ENCODE measurements at regions of chr1 and their contacts with region 1.

Region 1: DNA sequence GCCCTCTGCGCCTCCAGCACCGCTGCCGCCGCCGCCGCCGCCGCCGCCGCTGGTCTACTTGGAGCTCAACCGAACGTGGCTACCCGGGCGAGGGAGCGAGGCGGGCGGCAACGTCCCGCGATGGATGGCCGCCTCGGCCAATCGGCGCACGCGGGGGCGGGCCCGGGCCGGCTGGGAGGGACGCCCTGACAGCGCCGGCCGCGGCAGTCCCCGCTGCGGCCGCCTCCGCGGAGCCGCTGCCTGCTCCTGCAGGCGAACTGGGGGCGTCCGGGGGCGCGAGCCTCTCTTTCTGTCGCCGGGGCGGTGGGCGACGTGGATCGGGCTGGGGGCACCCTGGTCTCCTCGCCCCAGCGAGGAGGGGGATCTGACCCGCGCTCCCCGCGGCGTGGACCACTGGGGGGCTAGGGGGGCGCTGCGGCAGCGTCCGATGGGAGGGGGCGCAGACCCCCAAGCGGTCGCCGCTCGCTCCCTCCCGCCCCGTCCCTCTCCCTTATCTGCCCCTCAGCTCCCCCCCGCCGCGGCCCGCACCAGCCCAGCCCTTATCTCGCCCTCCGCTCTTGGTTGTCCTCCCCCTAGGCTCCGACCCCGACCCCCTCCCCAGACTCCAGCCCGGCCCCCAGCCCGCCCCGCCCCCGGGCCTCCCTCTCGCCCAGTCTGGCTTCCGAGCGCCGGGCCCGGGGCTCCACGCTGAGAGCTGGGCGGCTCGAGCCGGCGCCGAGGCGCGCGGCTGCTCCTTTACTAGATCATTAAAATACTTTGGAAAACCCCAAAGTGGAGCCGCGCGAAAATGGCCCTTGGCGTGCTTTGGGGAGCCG is at the start of gene SSBP3:
- DNase-seq: peak; percentile 53 to 95
- H3K4me3 ChIP-seq: peak within 1 kb of the TSS; percentile 91 to 96
- H3K27ac ChIP-seq: peak within 1 kb of the TSS; percentile 85 to 86
- H3K4me1 ChIP-seq: peaks cover 6 to 35% of the 10 kb centered on the region in 2 donors
- H3K27me3 ChIP-seq: no peaks in the 10 kb centered on the region
- CTCF ChIP-seq: peak in 1 of 3 experiments; percentile 22
- total RNA-seq, gene SSBP3: 51.0 TPM

Region 2: GRCh38 chr1:53945433-53946251 is 460.9 kb before region 1 on chr1 and contains the start of gene IFT25:
- intact Hi-C with region 1: loop called (anchors 2 kb)
- DNase-seq: peak; percentile 87 to 98
- H3K4me3 ChIP-seq: peak within 1 kb of the TSS; percentile 80 to 96
- H3K27ac ChIP-seq: peak within 1 kb of the TSS; percentile 77 to 98
- H3K4me1 ChIP-seq: peaks cover 9 to 16% of the 10 kb centered on the region in 2 donors
- H3K27me3 ChIP-seq: no peaks in the 10 kb centered on the region
- CTCF ChIP-seq: no peak
- total RNA-seq, gene IFT25: not detected

Region 3: DNA sequence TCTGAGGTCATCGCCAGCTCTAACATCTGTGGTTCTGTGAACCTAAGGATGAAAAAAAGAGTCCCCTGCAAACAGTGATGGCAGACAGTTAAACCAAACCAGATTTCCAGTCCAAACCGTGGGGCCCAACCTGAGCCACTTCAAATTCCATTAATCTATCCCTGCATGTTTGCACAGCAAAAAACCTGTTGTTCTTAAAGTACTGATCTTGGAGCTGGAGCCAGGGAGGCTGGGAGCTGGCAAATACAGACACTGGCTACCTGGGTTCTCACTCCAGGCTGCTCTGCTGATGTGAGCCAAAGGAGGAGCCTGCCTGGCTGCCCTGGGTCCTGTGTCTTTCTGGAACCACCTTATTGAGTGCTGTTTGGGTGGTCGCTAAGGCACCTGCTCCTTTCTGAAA is 405.0 kb before region 1 on chr1:
- intact Hi-C with region 1: no loop called
- DNase-seq: no peak
- H3K4me3 ChIP-seq: no peak overlapping the region
- H3K27ac ChIP-seq: no peak overlapping the region
- H3K4me1 ChIP-seq: no peaks in the 10 kb centered on the region
- H3K27me3 ChIP-seq: no peaks in the 10 kb centered on the region
- CTCF ChIP-seq: no peak

Region 4: GRCh38 chr1:54199765-54200518 is 206.6 kb before region 1 on chr1 and contains the starts of genes CYB5RL and MRPL37:
- intact Hi-C with region 1: loop called (anchors 5 kb)
- DNase-seq: peak; percentile 74 to 96
- H3K4me3 ChIP-seq: peak within 1 kb of the TSS; percentile 73 to 75
- H3K27ac ChIP-seq: peak within 1 kb of the TSS; percentile 44 to 68
- H3K4me1 ChIP-seq: peaks cover 0 to 16% of the 10 kb centered on the region in 2 donors
- H3K27me3 ChIP-seq: no peaks in the 10 kb centered on the region
- CTCF ChIP-seq: no peak
- total RNA-seq, gene CYB5RL: 5.1 TPM
- total RNA-seq, gene MRPL37: 51.2 TPM

Region 5: GRCh38 chr1:54350360-54350759 is 56.2 kb before region 1 on chr1:
- intact Hi-C with region 1: loop called (anchors 5 kb)
- DNase-seq: no peak
- H3K4me3 ChIP-seq: no peak overlapping the region
- H3K27ac ChIP-seq: peak overlapping the region; percentile 7 to 50
- H3K4me1 ChIP-seq: peaks cover 0 to 14% of the 10 kb centered on the region in 2 donors
- H3K27me3 ChIP-seq: no peaks in the 10 kb centered on the region
- CTCF ChIP-seq: no peak

Region 6: GRCh38 chr1:54480525-54480848 is 73.9 kb after region 1 on chr1:
- intact Hi-C with region 1: no loop called
- DNase-seq: no peak
- H3K4me3 ChIP-seq: no peak overlapping the region
- H3K27ac ChIP-seq: no peak overlapping the region
- H3K4me1 ChIP-seq: peaks cover 2 to 5% of the 10 kb centered on the region in 2 donors
- H3K27me3 ChIP-seq: no peaks in the 10 kb centered on the region
- CTCF ChIP-seq: no peak

Region 7: DNA sequence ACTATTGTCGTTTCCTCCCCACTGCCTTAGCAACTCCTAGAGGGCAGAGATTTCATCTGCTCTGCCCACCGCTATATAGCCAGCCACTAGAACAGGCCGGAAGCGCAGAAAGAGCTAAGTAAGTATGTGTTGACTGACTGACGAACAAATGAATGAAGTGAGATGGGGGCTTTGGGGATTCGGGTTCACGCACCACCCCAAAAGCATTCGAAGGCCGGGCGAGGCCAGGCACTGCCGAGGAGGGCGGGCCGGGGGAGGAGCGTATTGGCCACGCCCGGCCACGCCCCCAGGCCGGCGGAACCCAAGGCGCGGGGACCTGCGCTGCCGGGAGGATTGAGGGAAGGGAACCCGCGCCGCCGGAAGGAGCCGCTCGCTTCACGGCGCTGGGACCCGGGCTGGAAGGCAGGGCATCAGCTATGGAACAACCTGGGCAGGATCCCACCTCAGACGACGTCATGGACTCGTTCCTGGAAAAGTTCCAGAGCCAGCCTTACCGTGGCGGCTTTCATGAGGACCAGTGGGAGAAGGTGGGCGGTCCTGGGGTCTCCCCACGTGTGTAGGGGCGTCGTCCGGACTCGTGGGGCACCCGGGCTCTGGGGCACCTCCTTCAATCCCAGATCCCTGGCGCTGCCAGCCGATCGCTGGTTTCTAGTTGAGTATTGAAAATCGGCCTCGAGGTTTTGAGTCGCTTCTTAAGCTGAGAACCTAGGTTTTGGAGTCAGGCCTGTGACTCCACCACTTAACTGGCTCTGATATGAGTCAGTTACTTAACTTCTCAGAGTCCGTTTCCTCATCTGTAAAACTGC is 309.1 kb after region 1 on chr1 and contains the start of gene TTC4:
- intact Hi-C with region 1: loop called (anchors 5 kb)
- DNase-seq: peak; percentile 25 to 88
- H3K4me3 ChIP-seq: peak within 1 kb of the TSS; percentile 69 to 92
- H3K27ac ChIP-seq: peak within 1 kb of the TSS; percentile 73 to 82
- H3K4me1 ChIP-seq: peaks cover 0 to 8% of the 10 kb centered on the region in 2 donors
- H3K27me3 ChIP-seq: no peaks in the 10 kb centered on the region
- CTCF ChIP-seq: no peak
- total RNA-seq, gene TTC4: 20.6 TPM